A549 (cell line): ENCODE measurements at regions of chr12 and their contacts with region 1.

Region 1: GRCh38 chr12:104381731-104382480 is 74.8 kb upstream of the CHST11 start:
- DNase-seq: peak; percentile 82 to 86
- ATAC-seq: peak; percentile 92 to 93
- H3K4me3 ChIP-seq: no peak overlapping the region
- H3K27ac ChIP-seq: peak overlapping the region; percentile 31 to 68; a peak in 5 of 6 replicates
- H3K4me1 ChIP-seq: peaks cover 22% of the 10 kb centered on the region
- CTCF ChIP-seq: peak; percentile 96
- EP300 ChIP-seq: no peak
- POLR2A ChIP-seq: no peak
- RAD21 ChIP-seq: peak; percentile 99

Region 2: GRCh38 chr12:104329707-104330532 is 52.0 kb before region 1 on chr12:
- CTCF ChIA-PET with region 1: no interaction called
- POLR2A ChIA-PET with region 1: no interaction called
- DNase-seq: peak in 1 of 2 experiments; percentile 63
- ATAC-seq: peak; percentile 42 to 45; a peak in 5 of 6 replicates
- H3K4me3 ChIP-seq: no peak overlapping the region
- H3K27ac ChIP-seq: peak overlapping the region in 1 of 2 experiments; percentile 63; a peak in 3 of 6 replicates
- H3K4me1 ChIP-seq: peaks cover 100% of the 10 kb centered on the region
- CTCF ChIP-seq: no peak
- EP300 ChIP-seq: no peak
- POLR2A ChIP-seq: no peak
- RAD21 ChIP-seq: no peak

Region 3: GRCh38 chr12:104435765-104436164 is 53.9 kb after region 1 on chr12:
- CTCF ChIA-PET with region 1: interaction called, 12 read pairs
- POLR2A ChIA-PET with region 1: no interaction called
- DNase-seq: no peak
- ATAC-seq: no peak
- H3K4me3 ChIP-seq: no peak overlapping the region
- H3K27ac ChIP-seq: no peak overlapping the region
- H3K4me1 ChIP-seq: no peaks in the 10 kb centered on the region
- CTCF ChIP-seq: no peak
- EP300 ChIP-seq: no peak
- POLR2A ChIP-seq: no peak
- RAD21 ChIP-seq: no peak

Region 4: GRCh38 chr12:104519190-104519989 is 137.5 kb after region 1 on chr12:
- CTCF ChIA-PET with region 1: interaction called, 10 read pairs
- POLR2A ChIA-PET with region 1: no interaction called
- DNase-seq: no peak
- ATAC-seq: no peak
- H3K4me3 ChIP-seq: no peak overlapping the region
- H3K27ac ChIP-seq: no peak overlapping the region
- H3K4me1 ChIP-seq: peaks cover 23% of the 10 kb centered on the region
- CTCF ChIP-seq: no peak
- EP300 ChIP-seq: no peak
- POLR2A ChIP-seq: no peak
- RAD21 ChIP-seq: no peak

Region 5: DNA sequence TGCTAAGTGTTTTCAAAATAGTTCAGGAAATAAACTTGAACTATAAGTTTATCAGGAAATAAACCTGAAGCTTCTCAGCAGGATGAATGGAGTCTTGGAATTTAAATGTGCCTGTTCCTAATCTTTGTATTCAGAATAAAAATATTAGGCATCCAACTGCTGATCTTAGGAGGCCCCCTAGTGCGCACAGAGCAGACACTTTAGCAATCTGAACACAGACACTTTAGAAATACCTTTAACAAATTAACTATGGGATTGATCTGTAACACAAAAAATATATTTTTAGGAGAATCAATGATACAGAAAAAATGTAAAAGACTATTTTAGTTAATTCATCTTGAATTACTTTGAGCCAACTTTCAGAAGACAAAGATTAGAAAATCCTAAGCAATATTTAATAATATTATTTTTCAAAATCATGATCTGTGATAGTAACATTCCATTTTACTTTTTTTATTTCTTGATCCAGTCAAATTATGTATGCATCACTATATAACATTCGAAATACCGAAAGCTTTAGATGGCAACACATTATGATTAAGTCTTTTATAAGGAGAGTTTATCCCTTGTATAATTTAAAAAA is 495.3 kb after region 1 on chr12:
- CTCF ChIA-PET with region 1: interaction called, 17 read pairs
- POLR2A ChIA-PET with region 1: no interaction called
- DNase-seq: peak; percentile 13 to 50
- ATAC-seq: peak; percentile 76 to 83; a peak in 5 of 6 replicates
- H3K4me3 ChIP-seq: no peak overlapping the region
- H3K27ac ChIP-seq: no peak overlapping the region
- H3K4me1 ChIP-seq: peaks cover 6% of the 10 kb centered on the region
- CTCF ChIP-seq: peak; percentile 78
- EP300 ChIP-seq: no peak
- POLR2A ChIP-seq: no peak
- RAD21 ChIP-seq: peak; percentile 89 to 93

Region 6: DNA sequence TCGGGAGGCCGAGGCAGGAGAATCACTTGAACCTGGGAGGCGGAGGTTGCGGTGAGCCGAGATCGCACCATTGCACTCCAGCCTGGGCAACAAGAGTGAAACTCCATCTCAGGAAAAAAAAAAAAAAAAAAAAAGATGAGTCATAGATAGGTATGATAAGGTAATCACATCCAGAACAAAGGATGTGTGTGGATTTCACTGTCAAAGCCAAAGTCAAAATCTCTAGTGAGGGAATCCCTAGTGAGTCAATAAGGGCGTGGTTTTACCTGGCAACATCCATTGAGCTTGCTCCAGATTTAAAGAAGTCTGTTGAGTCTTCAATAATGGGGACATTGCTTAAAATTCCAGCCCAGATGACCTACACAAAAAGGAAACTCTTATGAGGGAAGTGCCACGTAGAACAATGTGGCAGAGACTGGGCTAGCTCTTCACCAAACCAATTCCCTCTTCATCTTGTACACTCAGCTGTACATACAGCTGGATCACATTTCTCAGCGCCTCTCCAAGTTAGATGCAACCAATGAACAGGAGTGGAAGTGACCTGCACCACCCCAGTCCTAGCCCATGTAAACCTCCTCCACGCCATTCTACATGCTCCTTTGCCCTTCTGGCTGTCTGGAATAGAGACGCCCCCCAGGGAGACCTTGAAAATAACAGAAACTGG is 678.9 kb after region 1 on chr12:
- CTCF ChIA-PET with region 1: interaction called, 55 read pairs
- POLR2A ChIA-PET with region 1: no interaction called
- DNase-seq: no peak
- ATAC-seq: peak in 1 of 2 experiments; percentile 34; a peak in 1 of 6 replicates
- H3K4me3 ChIP-seq: no peak overlapping the region
- H3K27ac ChIP-seq: no peak overlapping the region
- H3K4me1 ChIP-seq: no peaks in the 10 kb centered on the region
- CTCF ChIP-seq: no peak
- EP300 ChIP-seq: no peak
- POLR2A ChIP-seq: no peak
- RAD21 ChIP-seq: no peak